ENCODE measurements at regions of chr17 and their contacts with region 1.

Region 1: GRCh38 chr17:63859257-63859656 is 14.2 kb downstream of the CSH2 start:
- DNase-seq: no peak
- ATAC-seq: no peak
- H3K4me3 ChIP-seq: no peak overlapping the region
- H3K27ac ChIP-seq: no peak overlapping the region
- H3K4me1 ChIP-seq: no peaks in the 10 kb centered on the region
- H3K27me3 ChIP-seq: peaks cover 1 to 4% of the 10 kb centered on the region in 2 experiments; a peak in 2 of 4 replicates
- CTCF ChIP-seq: no peak
- EP300 ChIP-seq: no peak
- POLR2A ChIP-seq: no peak
- RAD21 ChIP-seq: no peak

Region 2: DNA sequence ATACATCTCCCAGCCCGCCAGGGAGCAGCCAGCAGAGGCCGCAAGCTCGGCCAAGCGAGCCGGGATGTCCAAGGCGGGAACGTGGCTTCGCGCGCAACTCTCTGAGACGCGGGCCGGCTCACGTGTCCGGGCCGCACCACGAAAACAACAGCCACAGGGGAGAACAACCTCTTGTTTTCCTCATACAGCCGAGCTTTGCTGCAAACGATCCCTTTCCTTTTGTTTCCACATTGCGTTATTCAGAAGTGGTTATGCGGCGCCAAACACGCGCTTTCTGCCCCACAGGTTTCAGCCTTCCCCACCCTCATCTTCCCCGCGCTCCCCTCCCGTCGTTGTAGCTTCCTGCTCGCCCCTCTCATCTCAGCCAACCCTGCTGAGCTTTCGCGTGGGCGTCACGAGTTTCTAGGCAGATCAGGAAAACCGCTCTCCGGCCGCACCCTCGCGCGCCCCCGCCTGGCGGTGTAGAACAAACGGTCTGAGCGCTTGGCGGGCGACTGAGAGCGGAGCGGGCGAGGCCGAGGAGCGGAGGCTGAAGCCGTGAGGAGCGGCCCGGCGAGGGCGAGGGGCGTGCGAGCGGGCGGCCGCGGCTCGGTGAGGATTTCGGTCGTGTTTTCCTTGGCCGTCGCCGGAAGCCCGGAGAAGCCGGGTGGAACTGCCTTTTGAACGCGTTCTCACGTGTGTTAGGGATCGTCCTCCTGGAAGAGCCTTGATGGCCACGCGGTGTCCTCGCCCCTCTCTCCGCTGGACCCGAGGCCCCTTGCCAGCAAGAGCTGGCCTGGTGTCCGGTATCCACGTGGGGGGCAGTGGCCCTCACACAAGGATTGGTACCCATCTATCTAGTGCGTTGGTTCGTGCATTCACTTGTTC is 10.2 kb before region 1 on chr17:
- CTCF ChIA-PET with region 1: interaction called, 51 read pairs
- POLR2A ChIA-PET with region 1: interaction called, 6 read pairs
- RAD21 ChIA-PET with region 1: no interaction called
- SMC1A ChIA-PET with region 1: interaction called, 3 read pairs
- in situ Hi-C with region 1: no loop called
- intact Hi-C with region 1: no loop called
- DNase-seq: peak; percentile 72
- ATAC-seq: peak; percentile 98
- H3K4me3 ChIP-seq: peak overlapping the region; percentile 12; the same call in 1 of the 2 replicates
- H3K27ac ChIP-seq: no peak overlapping the region
- H3K4me1 ChIP-seq: peaks cover 7% of the 10 kb centered on the region
- H3K27me3 ChIP-seq: no peaks in the 10 kb centered on the region
- CTCF ChIP-seq: peak; percentile 76 to 84 (median 80)
- EP300 ChIP-seq: no peak
- POLR2A ChIP-seq: 0 out of 2 replicates have a peak, but pooled peaks have one; percentile 36
- RAD21 ChIP-seq: no peak

Region 3: DNA sequence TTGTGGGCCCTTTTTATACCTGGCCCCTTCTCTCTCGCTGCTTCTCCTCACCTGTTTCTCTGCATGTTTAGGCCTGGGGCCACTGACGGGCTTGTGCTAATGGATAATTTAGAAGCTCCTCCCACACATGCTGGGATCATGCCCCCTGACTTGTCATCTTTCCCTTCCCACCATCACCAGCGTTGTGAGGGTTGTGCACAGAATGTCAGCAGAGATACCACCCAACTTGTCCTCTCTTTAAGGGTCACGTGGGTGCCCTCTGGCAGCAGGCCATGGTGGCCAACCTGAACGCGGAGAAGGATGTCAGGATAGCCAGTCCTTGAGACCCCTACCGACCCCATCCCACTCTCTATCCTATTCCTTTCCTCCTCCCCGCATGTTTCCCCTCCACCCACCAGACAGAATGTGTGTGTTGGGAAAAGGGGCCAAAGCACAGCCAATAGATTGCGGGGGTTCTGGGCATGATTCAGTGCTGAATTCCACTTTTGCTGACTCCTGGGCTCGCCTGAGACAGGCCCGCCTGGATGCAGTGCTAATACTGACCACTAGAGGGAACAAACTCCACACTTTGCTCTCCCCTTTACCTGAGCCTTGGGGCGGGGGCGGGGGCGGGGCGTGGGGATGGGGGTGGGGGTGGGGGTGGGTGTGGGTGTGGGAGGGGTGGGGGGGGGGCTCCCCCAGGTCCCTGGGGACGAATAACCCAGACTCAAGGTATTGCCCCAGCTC is 22.8 kb after region 1 on chr17 and contains the start of gene GH2:
- CTCF ChIA-PET with region 1: interaction called, 11 read pairs
- POLR2A ChIA-PET with region 1: no interaction called
- RAD21 ChIA-PET with region 1: interaction called, 3 read pairs
- SMC1A ChIA-PET with region 1: no interaction called
- in situ Hi-C with region 1: no loop called
- intact Hi-C with region 1: loop called (anchors 1 kb)
- DNase-seq: no peak
- ATAC-seq: peak; percentile 95
- H3K4me3 ChIP-seq: no peak within 1 kb of the TSS
- H3K27ac ChIP-seq: no peak within 1 kb of the TSS
- H3K4me1 ChIP-seq: no peaks in the 10 kb centered on the region
- H3K27me3 ChIP-seq: no peaks in the 10 kb centered on the region
- CTCF ChIP-seq: peak; percentile 69 to 84 (median 72)
- EP300 ChIP-seq: no peak
- POLR2A ChIP-seq: no peak
- RAD21 ChIP-seq: no peak
- polyA plus RNA-seq, gene GH2: not detected

Region 4: DNA sequence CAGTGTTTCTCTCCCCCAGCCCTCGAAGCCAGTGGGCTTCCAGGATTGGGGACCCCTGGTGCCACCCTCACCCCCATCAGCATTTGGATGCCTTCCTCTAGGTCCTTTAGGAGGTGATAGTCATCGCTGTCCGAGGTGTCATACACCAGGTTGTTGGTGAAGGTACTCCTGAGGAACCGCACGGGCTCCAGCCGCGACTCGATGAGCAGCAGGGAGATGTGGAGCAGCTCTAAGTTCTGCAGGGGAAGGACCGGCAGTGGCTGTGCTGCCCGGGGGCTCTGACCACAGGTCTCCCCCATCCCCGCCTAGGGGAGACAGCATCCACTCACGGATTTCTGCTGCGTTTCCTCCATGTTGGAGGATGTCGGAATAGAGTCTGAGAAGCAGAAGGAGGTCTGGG is 50.8 kb after region 1 on chr17:
- CTCF ChIA-PET with region 1: no interaction called
- POLR2A ChIA-PET with region 1: no interaction called
- RAD21 ChIA-PET with region 1: no interaction called
- SMC1A ChIA-PET with region 1: no interaction called
- in situ Hi-C with region 1: no loop called
- intact Hi-C with region 1: no loop called
- DNase-seq: no peak
- ATAC-seq: no peak
- H3K4me3 ChIP-seq: no peak overlapping the region
- H3K27ac ChIP-seq: no peak overlapping the region
- H3K4me1 ChIP-seq: no peaks in the 10 kb centered on the region
- H3K27me3 ChIP-seq: peaks cover 0 to 2% of the 10 kb centered on the region in 2 experiments; a peak in 2 of 4 replicates
- CTCF ChIP-seq: no peak
- EP300 ChIP-seq: no peak
- POLR2A ChIP-seq: no peak
- RAD21 ChIP-seq: no peak